Activated B cell treated with CpG ODN at 0.5 μM for 24 hours (primary cell): ENCODE measurements at regions of chr2 and their contacts with region 1.

Region 1: GRCh38 chr2:144332356-144333142 is 187.4 kb downstream of the ZEB2 start:
- DNase-seq: peak; percentile 93
- ATAC-seq: peak; percentile 91
- H3K4me3 Mint-ChIP-seq: peak overlapping the region; percentile 92
- H3K27ac Mint-ChIP-seq: peak overlapping the region; percentile 87
- H3K4me1 Mint-ChIP-seq: peaks cover 22% of the 10 kb centered on the region
- H3K27me3 Mint-ChIP-seq: no peaks in the 10 kb centered on the region
- CTCF ChIP-seq: no peak

Region 2: GRCh38 chr2:144183727-144184126 is 148.8 kb before region 1 on chr2:
- CTCF ChIA-PET with region 1: no interaction called
- POLR2A ChIA-PET with region 1: interaction called, 12 read pairs
- intact Hi-C with region 1: loop called (anchors 1 kb)
- DNase-seq: peak; percentile 35
- ATAC-seq: peak; percentile 96
- H3K4me3 Mint-ChIP-seq: peak overlapping the region; percentile 82
- H3K27ac Mint-ChIP-seq: peak overlapping the region; percentile 85
- H3K4me1 Mint-ChIP-seq: peaks cover 28% of the 10 kb centered on the region
- H3K27me3 Mint-ChIP-seq: no peaks in the 10 kb centered on the region
- CTCF ChIP-seq: no peak

Region 3: DNA sequence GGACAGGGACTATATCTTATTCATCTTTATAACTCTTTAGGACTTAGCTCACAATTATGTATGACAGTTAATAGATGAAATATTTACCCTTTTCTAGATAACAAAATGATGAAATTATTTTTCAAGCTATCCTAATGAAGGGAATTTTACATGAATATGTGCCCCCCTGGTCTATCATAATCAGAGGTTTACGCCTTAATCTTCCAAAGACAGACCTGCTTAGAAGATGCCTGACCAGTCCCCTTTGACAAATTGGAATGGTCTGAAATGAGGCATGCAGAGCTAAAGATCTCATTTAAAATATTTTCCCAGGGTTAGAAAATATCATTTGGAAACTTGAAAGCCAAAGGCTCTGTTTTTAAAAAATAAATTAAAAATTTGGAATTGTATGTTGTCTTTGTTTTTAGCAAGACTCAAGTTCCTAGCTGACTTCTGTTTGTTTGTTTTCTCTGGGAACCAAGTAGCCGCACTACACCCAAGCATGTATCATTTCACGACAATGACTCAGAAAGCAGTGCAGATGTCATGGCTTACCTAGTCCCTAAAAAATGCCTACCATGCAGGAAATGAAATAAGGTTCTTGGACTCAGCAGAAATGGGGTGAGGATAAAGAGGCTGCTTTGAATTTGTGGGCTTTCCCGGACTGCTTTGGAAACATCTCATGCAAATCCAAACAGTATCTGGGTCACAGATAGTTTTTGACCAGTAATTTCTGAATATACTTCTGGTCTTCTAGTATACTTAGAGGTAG is 25.2 kb after region 1 on chr2:
- CTCF ChIA-PET with region 1: no interaction called
- POLR2A ChIA-PET with region 1: interaction called, 3 read pairs
- intact Hi-C with region 1: loop called (anchors 2 kb)
- DNase-seq: no peak
- ATAC-seq: peak; percentile 60
- H3K4me3 Mint-ChIP-seq: no peak overlapping the region
- H3K27ac Mint-ChIP-seq: peak overlapping the region; percentile 55
- H3K4me1 Mint-ChIP-seq: peaks cover 33% of the 10 kb centered on the region
- H3K27me3 Mint-ChIP-seq: no peaks in the 10 kb centered on the region
- CTCF ChIP-seq: no peak

Region 4: DNA sequence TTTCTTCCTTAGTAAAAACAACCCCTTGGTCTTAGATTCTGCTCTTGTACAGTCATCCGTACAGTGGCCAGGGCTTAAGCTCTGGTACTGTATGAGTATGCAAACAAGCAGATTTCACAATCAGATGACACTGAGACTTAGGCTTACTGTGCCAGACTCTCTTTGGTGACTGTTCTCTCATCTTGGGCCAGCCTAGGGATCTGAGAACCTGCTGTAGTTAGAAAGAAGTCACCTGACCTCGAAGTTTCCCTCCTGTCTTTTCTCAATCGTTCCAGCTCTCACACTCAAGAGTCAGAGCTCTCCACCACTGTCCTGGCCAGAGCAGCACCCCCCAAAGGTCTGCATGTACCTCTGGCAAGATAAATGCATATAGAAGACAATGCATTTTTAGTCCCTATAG is 124.1 kb after region 1 on chr2:
- CTCF ChIA-PET with region 1: no interaction called
- POLR2A ChIA-PET with region 1: interaction called, 7 read pairs
- intact Hi-C with region 1: loop called (anchors 5 kb)
- DNase-seq: no peak
- ATAC-seq: peak; percentile 90
- H3K4me3 Mint-ChIP-seq: peak overlapping the region; percentile 25
- H3K27ac Mint-ChIP-seq: peak overlapping the region; percentile 83
- H3K4me1 Mint-ChIP-seq: peaks cover 96% of the 10 kb centered on the region
- H3K27me3 Mint-ChIP-seq: no peaks in the 10 kb centered on the region
- CTCF ChIP-seq: no peak